ENCODE measurements at regions of chr6 and their contacts with region 1.

Region 1: GRCh38 chr6:56902641-56903464 is 52.1 kb upstream of the BEND6 start:
- DNase-seq: peak; percentile 34 to 70 (median 61)
- H3K4me3 ChIP-seq: no peak overlapping the region
- H3K27ac ChIP-seq: no peak overlapping the region
- H3K4me1 ChIP-seq: peaks cover 0 to 1% (median 0%) of the 10 kb centered on the region in 4 experiments
- H3K27me3 ChIP-seq: no peaks in the 10 kb centered on the region

Region 2: DNA sequence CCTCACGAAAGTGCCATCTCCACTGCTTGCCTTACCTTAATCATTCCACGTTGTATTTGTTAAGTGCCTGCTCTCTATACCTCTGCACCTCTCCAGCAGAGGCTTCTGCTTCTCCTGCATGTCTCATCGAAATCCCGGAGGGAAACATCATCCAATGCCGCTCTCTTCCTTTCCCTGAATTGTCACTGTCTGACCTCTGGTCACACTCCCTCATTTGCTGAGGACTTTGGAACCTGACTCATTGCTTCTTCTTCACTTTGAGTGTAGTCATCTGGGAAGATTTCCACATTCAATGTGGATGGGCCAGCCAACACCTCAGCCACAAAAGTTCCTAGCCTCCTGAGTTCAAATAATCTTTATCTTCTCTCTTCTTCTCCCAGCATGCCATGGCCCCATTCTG is 26.9 kb before region 1 on chr6:
- CTCF ChIA-PET with region 1: no interaction called
- POLR2A ChIA-PET with region 1: no interaction called
- DNase-seq: no peak
- H3K4me3 ChIP-seq: no peak overlapping the region
- H3K27ac ChIP-seq: no peak overlapping the region
- H3K4me1 ChIP-seq: no peaks in the 10 kb centered on the region
- H3K27me3 ChIP-seq: no peaks in the 10 kb centered on the region

Region 3: GRCh38 chr6:56914798-56915658 is 12.2 kb after region 1 on chr6:
- CTCF ChIA-PET with region 1: interaction called, 31 read pairs
- POLR2A ChIA-PET with region 1: no interaction called
- DNase-seq: peak in 2 of 3 donors; percentile 49 to 78
- H3K4me3 ChIP-seq: no peak overlapping the region
- H3K27ac ChIP-seq: no peak overlapping the region
- H3K4me1 ChIP-seq: peaks cover 0 to 15% (median 7%) of the 10 kb centered on the region in 4 experiments
- H3K27me3 ChIP-seq: no peaks in the 10 kb centered on the region

Region 4: GRCh38 chr6:56955171-56956045 is 52.6 kb after region 1 on chr6:
- CTCF ChIA-PET with region 1: interaction called, 62 read pairs
- POLR2A ChIA-PET with region 1: interaction called, 3 read pairs
- DNase-seq: peak; percentile 83 to 95 (median 95)
- H3K4me3 ChIP-seq: peak overlapping the region; percentile 60 to 90 (median 78)
- H3K27ac ChIP-seq: peak overlapping the region in 1 of 2 experiments; percentile 51
- H3K4me1 ChIP-seq: peaks cover 3 to 27% (median 21%) of the 10 kb centered on the region in 4 experiments
- H3K27me3 ChIP-seq: peaks cover 2 to 20% (median 8%) of the 10 kb centered on the region in 5 experiments

Region 5: DNA sequence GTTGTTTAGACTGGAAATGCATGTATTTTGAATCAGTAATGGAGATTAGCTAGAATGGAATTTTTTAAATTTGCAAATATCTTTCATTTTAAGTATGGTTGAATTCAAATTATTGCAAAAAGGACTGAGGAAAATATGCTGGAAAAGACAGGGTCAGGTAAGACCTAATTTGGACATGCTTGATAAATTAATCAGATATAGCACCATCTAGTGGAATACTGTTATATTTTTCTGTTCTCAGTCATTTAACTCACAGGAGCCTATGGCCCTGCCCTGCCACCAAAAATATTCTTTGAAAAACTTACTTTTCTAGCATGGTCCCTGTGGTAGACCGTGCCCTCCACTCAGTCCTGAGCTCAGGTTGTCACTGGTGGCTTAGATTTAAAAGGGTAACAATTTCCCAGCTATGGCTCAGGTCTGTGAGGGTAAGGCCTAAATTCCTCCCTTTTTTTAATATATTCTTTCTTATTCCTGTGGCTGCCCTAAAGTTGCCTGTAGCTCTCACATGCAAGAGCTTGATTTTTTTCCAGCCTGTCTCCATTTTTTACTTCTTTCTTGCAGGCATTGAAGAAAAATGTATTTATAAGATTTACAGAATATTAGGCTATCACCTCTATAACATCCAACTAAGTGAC is 118.3 kb after region 1 on chr6:
- CTCF ChIA-PET with region 1: interaction called, 48 read pairs
- POLR2A ChIA-PET with region 1: no interaction called
- DNase-seq: peak; percentile 42 to 68 (median 61)
- H3K4me3 ChIP-seq: no peak overlapping the region
- H3K27ac ChIP-seq: no peak overlapping the region
- H3K4me1 ChIP-seq: peaks cover 0 to 3% (median 0%) of the 10 kb centered on the region in 4 experiments
- H3K27me3 ChIP-seq: no peaks in the 10 kb centered on the region

Region 6: DNA sequence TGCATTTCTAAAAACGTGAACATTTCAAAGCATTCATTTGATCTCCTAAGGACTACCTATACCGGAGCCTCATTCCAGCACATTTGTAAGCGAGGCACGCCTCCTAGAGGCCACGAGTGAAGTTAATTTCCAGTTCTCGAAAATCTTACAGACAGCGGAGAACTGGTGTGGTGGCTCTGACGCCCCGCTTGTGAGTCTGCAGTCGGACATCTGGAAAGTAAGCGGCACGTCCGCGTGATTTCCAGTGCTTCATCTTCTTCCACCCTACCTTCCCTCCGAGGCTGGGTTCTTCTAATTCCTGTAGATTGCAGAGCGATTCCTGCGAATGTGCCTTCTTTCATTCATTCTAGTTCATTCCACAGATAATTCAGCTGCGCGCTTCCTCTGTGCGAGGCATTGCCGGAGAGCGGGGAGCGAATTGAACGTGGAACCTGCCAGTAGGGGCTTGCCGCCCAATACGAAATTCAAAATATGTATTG is 413.8 kb after region 1 on chr6:
- CTCF ChIA-PET with region 1: interaction called, 22 read pairs
- POLR2A ChIA-PET with region 1: no interaction called
- DNase-seq: peak; percentile 90 to 95 (median 94)
- H3K4me3 ChIP-seq: peak overlapping the region; percentile 40 to 100 (median 94)
- H3K27ac ChIP-seq: peak overlapping the region; percentile 51 to 78
- H3K4me1 ChIP-seq: peaks cover 0 to 14% (median 9%) of the 10 kb centered on the region in 4 experiments
- H3K27me3 ChIP-seq: no peaks in the 10 kb centered on the region